ENCODE measurements at regions of chr12 and their contacts with region 1.

Region 1: GRCh38 chr12:49623142-49623904 is at the start of gene PRPF40B:
- DNase-seq: peak; percentile 94

Region 2: DNA sequence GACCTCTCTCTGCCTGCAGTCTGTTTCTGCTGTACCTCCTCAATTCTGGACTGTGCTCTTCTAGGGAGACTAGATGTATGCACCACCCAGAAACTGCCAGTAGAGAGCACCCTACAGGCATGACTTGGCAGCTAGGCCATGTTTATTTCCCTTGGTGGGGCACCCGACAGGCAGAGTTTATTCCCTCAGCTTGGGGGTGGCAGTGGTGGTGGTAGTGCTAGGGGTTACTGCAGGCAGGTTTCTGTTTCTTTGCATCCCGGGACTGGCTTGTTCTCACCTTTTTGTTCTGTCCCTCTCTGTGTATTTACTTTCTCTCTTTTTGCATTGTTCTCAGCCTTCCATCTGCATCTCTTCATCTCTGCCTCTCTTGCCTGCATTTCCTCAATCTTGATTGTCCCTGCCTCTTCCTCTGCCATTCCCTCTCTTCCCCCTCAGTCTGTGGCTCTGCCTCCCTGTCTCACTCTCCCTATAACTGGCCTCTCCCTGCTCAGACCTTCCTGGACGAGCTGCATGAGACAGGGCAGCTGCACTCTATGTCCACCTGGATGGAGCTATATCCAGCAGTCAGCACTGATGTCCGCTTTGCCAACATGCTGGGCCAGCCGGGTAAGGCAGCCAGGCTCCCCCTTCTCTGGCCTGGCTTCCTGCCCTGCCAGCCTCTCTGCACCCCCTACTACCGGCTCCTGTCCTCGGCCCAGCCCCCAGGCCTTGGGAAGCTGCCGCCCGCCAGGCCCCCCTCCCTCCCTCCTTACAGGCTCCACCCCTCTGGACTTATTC is 13.8 kb after region 1 on chr12:
- CTCF ChIA-PET with region 1: interaction called, 11 read pairs
- POLR2A ChIA-PET with region 1: interaction called, 4 read pairs
- DNase-seq: peak; percentile 68

Measured in HEK293T (cell line).